ENCODE measurements at regions of chr1 and their contacts with region 1.

Region 1: DNA sequence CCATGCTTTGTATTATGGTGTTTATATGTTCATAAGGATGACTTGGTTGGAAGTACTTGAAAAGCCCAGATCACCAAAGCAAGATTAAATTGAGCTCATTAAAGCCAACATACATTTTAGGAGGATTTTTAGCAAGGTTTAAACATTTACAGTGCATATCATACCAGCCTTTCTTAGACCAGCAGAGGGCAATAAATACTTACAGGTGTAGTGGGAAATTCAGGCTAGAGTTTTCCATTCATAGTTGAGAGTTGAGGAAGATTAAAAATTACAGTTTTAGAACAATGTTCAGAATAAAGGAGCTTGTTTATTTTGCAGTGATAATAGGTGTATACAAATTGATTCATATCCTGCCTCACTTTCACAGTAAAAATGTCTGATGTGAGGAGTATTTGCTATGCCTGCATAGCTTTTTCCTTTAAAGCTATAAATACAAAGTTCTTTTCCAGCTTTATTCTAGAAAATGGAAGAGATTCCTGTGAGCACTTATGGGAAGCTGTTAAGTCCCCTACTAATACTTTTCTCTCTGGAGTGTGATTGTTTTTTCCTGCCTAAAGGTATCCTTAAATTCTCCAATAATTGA is 35.3 kb downstream of the DTL start:
- DNase-seq: no peak
- H3K4me3 ChIP-seq: no peak overlapping the region
- CTCF ChIP-seq: peak; percentile 53

Region 2: DNA sequence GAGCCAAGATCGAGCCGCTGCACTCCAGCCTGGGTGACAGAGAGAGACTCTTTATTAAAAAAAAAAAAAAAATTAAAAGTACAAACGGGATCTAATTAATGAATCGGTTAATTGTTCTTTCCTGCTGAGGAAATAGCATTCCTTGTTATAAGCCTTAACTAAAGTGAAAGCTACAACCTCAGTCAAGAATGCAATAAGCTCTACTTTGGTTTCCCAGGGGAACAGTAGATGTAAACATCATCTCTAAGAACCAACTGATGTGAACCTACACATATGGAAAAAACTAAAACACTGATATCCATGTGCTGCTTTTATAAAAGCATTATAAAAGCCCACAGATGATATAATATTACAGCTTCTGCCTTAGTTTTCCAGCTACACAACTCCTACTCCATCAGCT is 282.2 kb before region 1 on chr1:
- CTCF ChIA-PET with region 1: no interaction called
- POLR2A ChIA-PET with region 1: no interaction called
- DNase-seq: peak; percentile 23
- H3K4me3 ChIP-seq: no peak overlapping the region
- CTCF ChIP-seq: no peak

Region 3: GRCh38 chr1:212035123-212035834 is 35.5 kb before region 1 on chr1 and contains the starts of genes DTL and INTS7:
- CTCF ChIA-PET with region 1: interaction called, 18 read pairs
- POLR2A ChIA-PET with region 1: no interaction called
- DNase-seq: peak; percentile 95
- H3K4me3 ChIP-seq: peak within 1 kb of the TSS; percentile 91
- CTCF ChIP-seq: peak; percentile 69

Region 4: GRCh38 chr1:212082765-212083406 is 12.1 kb after region 1 on chr1:
- CTCF ChIA-PET with region 1: interaction called, 57 read pairs
- POLR2A ChIA-PET with region 1: no interaction called
- DNase-seq: no peak
- H3K4me3 ChIP-seq: no peak overlapping the region
- CTCF ChIP-seq: no peak

Region 5: DNA sequence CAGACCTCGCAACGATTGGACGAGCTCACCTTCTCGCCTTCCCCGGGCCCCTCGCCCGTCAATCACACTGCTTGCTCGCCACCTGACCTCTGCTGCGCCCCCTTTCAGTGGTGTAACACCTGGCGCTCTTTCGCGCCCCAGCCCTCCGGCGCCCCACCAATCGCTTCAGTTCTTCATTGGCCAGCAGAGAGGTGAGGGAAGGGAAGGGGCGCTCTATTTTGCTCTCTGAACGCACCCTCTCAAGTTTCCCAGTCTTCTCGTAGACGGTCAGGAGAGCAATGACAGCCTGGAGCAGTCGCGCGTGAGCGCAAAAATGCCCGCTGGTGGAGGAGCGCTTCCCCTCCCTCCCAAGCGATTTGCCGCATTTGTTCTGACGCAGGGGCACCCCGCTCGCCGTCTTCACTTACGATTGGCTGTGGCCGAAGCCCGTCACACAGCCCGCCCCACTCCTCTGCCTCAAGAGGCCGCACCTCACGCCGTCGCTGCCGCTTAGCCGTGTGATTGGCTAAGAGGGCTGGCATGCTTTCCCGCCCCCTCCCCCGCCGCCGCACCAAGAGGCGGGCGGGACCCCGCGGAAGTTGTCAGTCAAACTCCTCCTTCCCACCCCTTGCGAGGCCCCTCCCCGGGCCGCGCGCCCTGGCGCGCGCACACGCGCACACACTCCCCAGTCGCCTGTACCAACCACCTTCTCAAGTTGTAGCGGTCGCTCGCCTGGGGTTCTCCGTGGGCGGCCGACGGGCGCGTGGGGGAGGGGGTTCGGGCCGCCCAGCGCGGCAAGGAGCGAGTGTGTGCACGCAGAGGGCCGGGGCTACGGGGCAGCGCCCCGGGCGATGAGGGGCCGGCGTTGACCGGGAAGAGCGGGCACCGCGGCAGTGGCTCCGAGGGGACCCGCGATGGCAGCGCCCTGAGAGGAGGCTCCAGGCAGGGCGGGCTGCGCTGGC is 214.2 kb after region 1 on chr1 and contains the start of gene PPP2R5A:
- CTCF ChIA-PET with region 1: interaction called, 179 read pairs
- POLR2A ChIA-PET with region 1: interaction called, 8 read pairs
- DNase-seq: peak; percentile 94
- H3K4me3 ChIP-seq: peak within 1 kb of the TSS; percentile 81
- CTCF ChIP-seq: peak; percentile 9

Region 6: GRCh38 chr1:212353181-212353580 is 282.4 kb after region 1 on chr1:
- CTCF ChIA-PET with region 1: interaction called, 302 read pairs
- POLR2A ChIA-PET with region 1: no interaction called
- DNase-seq: no peak
- H3K4me3 ChIP-seq: no peak overlapping the region
- CTCF ChIP-seq: no peak

Region 7: GRCh38 chr1:212432706-212433576 is 362.1 kb after region 1 on chr1 and contains the start of gene NENF:
- CTCF ChIA-PET with region 1: interaction called, 11 read pairs
- POLR2A ChIA-PET with region 1: no interaction called
- DNase-seq: no peak
- H3K4me3 ChIP-seq: peak within 1 kb of the TSS; percentile 65
- CTCF ChIP-seq: no peak

Measured in AG04449 (cell line).